Heart left ventricle (tissue), 16 donors: ENCODE measurements at regions of chr4 and their contacts with region 1.

Region 1: GRCh38 chr4:77854431-77855111 is 8.1 kb upstream of the MRPL1 start:
- DNase-seq: no peak
- ATAC-seq: peak; percentile 46 to 93 (median 74)
- H3K4me3 ChIP-seq: peak overlapping the region in 3 of 12 donors; percentile 2 to 12 (median 7)
- H3K27ac ChIP-seq: peak overlapping the region; percentile 3 to 90 (median 78)
- H3K4me1 ChIP-seq: peaks cover 0 to 40% (median 11%) of the 10 kb centered on the region in 12 donors
- H3K27me3 ChIP-seq: no peaks in the 10 kb centered on the region
- CTCF ChIP-seq: no peak
- POLR2A ChIP-seq: no peak

Region 2: DNA sequence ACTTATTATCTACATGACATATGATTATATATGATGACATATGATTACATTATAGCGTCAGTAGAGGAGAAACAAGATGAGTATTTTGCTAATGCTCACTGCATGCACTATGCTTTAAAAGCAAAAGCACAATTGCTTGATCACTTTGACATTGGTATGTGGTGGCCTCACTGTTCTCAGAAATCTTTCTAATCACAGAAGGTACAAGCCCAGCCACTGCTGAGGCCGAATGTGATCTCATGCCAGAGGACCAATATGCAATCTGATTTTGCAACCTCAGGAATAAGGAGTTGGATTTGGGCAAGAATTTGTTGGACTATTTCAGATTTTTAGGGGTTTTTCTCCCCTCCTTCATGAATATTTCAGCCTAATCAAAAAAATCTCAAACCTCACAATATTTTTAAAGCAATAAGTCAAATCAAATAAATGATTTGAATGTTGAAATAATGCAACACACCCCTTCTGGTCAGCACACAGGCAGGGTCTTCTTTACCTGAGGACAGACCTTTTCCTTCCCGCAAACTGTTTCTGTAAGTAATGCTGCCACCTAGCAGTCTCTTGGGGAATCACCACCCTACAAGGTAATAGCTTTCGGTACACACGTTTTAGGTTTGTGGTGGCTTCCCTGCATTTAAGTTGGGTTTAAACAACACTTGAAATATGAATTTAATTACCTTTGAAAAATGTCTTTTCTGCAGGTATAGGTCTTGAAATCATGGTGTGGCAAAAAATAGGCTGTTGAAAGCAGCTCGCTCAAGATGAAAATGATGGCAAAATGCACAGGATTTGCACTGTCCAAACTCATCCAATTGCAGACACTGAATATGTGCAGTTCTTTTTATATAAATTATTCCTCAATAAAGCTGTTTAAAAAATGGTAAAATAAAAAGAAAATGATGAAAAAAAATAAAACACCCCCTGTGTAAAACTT is 253.8 kb before region 1 on chr4:
- intact Hi-C with region 1: no loop called
- DNase-seq: no peak
- ATAC-seq: no peak
- H3K4me3 ChIP-seq: no peak overlapping the region
- H3K27ac ChIP-seq: no peak overlapping the region
- H3K4me1 ChIP-seq: no peaks in the 10 kb centered on the region
- H3K27me3 ChIP-seq: peaks cover 0 to 2% (median 0%) of the 10 kb centered on the region in 9 donors
- CTCF ChIP-seq: peak; percentile 62 to 80 (median 73)
- POLR2A ChIP-seq: no peak

Region 3: DNA sequence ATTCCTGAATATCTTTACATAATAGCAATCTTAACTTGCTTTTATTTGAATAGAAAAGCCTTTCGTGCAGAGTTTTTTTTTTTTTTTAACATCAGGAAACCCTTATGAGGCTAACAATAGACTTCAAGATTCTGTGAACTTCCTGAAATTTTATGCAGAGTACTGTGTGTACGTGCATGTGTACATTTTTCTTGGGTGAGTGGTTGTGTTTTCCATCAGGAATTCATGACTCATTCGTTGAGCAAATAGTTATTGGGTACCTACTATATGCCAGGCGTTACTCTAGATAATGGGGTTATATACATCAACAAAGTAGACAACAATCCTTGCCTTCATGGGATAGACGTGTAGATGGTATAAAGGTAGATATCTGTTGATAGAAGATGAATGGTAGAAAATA is 67.1 kb after region 1 on chr4:
- intact Hi-C with region 1: loop called in 1 of 10 experiments (anchors 5 kb)
- DNase-seq: no peak
- ATAC-seq: peak; percentile 53 to 81 (median 70)
- H3K4me3 ChIP-seq: no peak overlapping the region
- H3K27ac ChIP-seq: peak overlapping the region; percentile 11 to 80 (median 68)
- H3K4me1 ChIP-seq: peaks cover 0 to 22% (median 4%) of the 10 kb centered on the region in 12 donors
- H3K27me3 ChIP-seq: no peaks in the 10 kb centered on the region
- CTCF ChIP-seq: no peak
- POLR2A ChIP-seq: no peak